OCI-LY7 (cell line): ENCODE measurements at regions of chr6 and their contacts with region 1.

Region 1: GRCh38 chr6:118859517-118860064 is 34.4 kb upstream of the ASF1A start:
- DNase-seq: no peak
- H3K4me3 ChIP-seq: no peak overlapping the region
- H3K27ac ChIP-seq: no peak overlapping the region
- H3K4me1 ChIP-seq: no peaks in the 10 kb centered on the region
- CTCF ChIP-seq: no peak

Region 2: GRCh38 chr6:118825661-118826060 is 33.9 kb before region 1 on chr6:
- CTCF ChIA-PET with region 1: no interaction called
- POLR2A ChIA-PET with region 1: interaction called, 11 read pairs
- intact Hi-C with region 1: no loop called
- DNase-seq: no peak
- H3K4me3 ChIP-seq: no peak overlapping the region
- H3K27ac ChIP-seq: no peak overlapping the region
- H3K4me1 ChIP-seq: no peaks in the 10 kb centered on the region
- CTCF ChIP-seq: no peak